ENCODE measurements at regions of chr1 and their contacts with region 1.

Region 1: GRCh38 chr1:94180650-94181049 is 56.7 kb downstream of the ARHGAP29 start:
- DNase-seq: no peak
- H3K4me3 ChIP-seq: no peak overlapping the region
- H3K27ac ChIP-seq: no peak overlapping the region
- H3K4me1 ChIP-seq: no peaks in the 10 kb centered on the region
- H3K27me3 ChIP-seq: no peaks in the 10 kb centered on the region
- CTCF ChIP-seq: no peak

Region 2: DNA sequence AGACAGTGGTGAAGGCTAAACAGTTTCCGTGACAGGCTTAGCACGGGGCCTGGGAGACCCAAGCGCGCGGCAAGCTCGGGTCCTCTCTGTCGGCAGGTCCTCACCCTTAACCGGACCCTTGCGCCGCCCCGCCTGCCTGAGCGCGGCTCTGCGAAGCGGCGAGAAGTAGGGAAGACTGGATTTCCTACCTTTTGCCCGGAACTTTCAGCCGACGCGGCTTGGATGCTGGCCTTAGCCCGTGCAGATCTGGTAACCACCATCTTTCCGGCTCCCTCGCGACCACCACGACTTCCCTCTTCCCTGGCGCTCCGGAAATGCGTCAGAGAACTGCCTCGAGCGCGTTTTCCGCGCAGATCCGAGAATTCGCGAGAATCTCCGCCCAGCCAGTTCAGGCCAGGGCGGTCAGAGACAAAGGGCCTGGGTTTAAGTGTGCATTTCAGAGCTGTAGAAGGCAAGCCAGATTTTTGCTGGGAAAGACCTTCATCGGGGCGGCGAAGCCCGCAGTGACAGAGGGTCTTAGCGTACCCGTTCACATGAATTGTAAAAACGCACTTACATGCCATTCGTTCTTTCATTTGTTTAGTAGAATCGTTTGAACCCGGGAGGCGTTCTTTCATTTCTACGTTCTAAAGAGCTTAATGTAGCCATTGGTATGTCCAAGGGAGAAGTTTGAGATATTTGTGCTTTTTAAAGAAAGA is 301.6 kb before region 1 on chr1 and contains the start of gene DNTTIP2:
- CTCF ChIA-PET with region 1: no interaction called
- dilution Hi-C with region 1: no loop called
- in situ Hi-C with region 1: loop called in 1 of 2 experiments (anchors 25 kb)
- intact Hi-C with region 1: no loop called
- DNase-seq: peak; percentile 90
- H3K4me3 ChIP-seq: peak within 1 kb of the TSS; percentile 77 to 86 (median 80)
- H3K27ac ChIP-seq: peak within 1 kb of the TSS; percentile 92
- H3K4me1 ChIP-seq: peaks cover 28% of the 10 kb centered on the region
- H3K27me3 ChIP-seq: no peaks in the 10 kb centered on the region
- CTCF ChIP-seq: no peak
- total RNA-seq, gene DNTTIP2: 40.5 to 74.9 TPM

Region 3: GRCh38 chr1:94020731-94021579 is 159.7 kb before region 1 on chr1:
- CTCF ChIA-PET with region 1: no interaction called
- dilution Hi-C with region 1: no loop called
- in situ Hi-C with region 1: no loop called
- intact Hi-C with region 1: no loop called
- DNase-seq: peak; percentile 70
- H3K4me3 ChIP-seq: no peak overlapping the region
- H3K27ac ChIP-seq: no peak overlapping the region
- H3K4me1 ChIP-seq: peaks cover 39% of the 10 kb centered on the region
- H3K27me3 ChIP-seq: no peaks in the 10 kb centered on the region
- CTCF ChIP-seq: no peak

Region 4: DNA sequence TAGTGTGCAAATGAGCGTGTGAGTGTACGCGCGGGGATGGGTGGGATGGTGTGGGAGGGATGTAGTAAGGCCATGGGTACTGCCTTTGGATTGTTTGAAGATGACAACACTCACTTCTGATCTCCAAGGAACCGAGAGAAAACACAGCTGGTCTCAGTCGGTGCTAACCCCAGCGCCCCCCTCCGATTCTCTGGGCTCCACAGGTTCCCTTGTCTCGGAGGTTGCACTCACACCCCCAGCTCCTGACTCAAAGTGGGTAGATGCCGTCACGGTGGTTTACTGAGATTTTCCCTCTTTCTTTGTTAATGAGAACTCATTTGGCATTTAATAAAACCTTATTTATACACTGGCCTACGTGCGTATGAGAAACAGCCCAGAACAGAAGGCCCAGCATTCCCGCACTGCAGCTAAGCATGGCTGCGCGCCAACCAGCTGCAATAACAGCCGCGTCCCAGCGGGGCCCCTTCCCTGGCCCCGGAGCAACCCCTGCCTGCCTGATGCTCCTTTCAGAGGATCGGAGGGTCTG is 85.5 kb before region 1 on chr1:
- CTCF ChIA-PET with region 1: no interaction called
- dilution Hi-C with region 1: loop called (anchors 5 kb)
- in situ Hi-C with region 1: no loop called
- intact Hi-C with region 1: no loop called
- DNase-seq: no peak
- H3K4me3 ChIP-seq: no peak overlapping the region
- H3K27ac ChIP-seq: no peak overlapping the region
- H3K4me1 ChIP-seq: no peaks in the 10 kb centered on the region
- H3K27me3 ChIP-seq: no peaks in the 10 kb centered on the region
- CTCF ChIP-seq: no peak

Region 5: DNA sequence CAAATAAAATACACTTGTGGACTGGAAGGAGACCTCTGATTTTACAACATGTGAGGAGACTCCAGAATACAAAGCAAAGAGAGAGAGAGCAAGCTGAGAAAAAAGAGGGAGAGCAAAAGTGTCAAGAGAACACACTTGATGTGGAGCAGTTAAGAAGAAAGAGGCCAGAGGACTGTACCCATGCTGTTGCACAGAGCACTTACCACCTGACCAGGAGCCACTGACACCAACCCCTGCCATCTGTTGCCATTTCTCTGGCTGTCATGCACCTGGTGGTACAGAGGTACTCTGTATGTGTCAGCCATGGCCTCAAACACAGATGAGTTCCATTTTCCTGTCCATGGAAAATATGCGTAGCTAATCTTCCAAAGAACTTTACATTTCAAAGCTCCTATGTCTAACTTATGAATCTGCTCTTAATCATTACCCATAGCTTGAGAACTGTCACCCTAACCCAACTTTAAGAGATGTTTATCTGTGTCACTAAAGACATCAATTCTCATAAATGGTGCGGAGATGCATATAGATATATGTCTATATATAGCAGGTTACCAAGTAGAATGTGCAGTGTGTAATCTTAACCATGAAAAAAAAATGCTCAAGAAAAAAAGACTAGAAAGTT is 204.8 kb after region 1 on chr1:
- CTCF ChIA-PET with region 1: no interaction called
- dilution Hi-C with region 1: no loop called
- in situ Hi-C with region 1: no loop called
- intact Hi-C with region 1: no loop called
- DNase-seq: no peak
- H3K4me3 ChIP-seq: no peak overlapping the region
- H3K27ac ChIP-seq: no peak overlapping the region
- H3K4me1 ChIP-seq: no peaks in the 10 kb centered on the region
- H3K27me3 ChIP-seq: peaks cover 2% of the 10 kb centered on the region
- CTCF ChIP-seq: no peak